ENCODE measurements at regions of chr1 and their contacts with region 1.

Region 1: DNA sequence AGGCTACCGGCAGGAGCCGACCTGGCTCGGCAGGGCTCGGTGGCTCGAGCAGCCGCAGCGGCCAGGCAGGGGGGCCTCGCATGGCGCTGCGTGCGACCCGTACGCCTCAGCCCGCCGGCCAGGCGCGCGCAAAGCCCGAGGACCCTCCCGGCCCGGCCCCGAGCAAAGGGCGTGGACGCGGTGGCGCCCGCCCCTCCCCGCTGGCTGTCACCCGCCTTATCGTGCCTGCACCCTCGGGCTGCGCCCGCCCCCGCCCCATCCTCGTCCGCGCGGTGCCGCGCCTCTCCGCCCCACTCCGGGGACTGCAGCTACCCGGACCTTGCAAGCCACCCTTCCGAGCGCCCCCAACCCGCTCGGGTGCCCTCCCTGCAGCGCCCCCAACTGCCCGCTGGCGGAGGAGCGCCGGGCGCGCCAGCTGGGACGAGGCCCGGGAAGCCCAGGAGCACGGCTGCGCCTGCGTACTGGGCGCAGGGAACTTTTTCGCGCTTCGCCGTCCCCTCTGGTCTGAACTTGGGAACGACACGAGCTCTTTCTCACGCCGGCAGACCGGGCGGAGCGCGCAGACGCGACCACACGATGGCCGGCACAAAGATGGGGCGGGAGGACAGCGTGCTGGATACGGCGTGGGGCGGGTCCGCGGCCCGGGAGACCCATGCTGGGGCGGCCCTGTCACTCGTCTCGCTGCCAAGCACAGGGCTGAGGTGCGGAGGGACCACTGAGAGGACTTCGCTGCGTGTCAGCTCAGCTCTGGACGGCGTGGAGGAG is at the start of gene ABCB10:
- DNase-seq: peak; percentile 98
- H3K4me3 ChIP-seq: peak within 1 kb of the TSS; percentile 79
- H3K27ac ChIP-seq: peak within 1 kb of the TSS; percentile 52
- H3K4me1 ChIP-seq: peaks cover 17% of the 10 kb centered on the region
- CTCF ChIP-seq: peak; percentile 80
- total RNA-seq, gene ABCB10: 14.1 and 16.4 TPM in 2 replicates

Region 2: DNA sequence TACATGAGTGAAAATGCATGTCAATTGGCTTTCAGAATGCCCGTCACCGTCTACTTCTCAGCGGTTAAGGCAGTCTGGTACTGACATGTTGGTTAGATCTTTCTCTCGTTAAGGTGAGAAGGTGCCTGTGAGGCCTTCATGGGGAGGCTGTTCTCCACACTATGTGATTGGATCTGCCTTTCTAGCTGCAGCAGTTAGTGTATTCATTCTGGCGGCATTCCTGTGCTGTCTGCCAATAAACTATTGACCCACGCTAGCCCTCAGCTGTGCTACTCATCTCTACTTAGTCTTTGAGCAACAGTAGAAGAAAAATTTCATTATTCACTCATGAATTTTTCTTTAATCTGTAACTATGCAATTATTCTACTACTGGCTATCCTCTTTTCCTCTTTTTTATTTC is 247.9 kb before region 1 on chr1:
- CTCF ChIA-PET with region 1: no interaction called
- POLR2A ChIA-PET with region 1: no interaction called
- intact Hi-C with region 1: no loop called
- DNase-seq: no peak
- H3K4me3 ChIP-seq: no peak overlapping the region
- H3K27ac ChIP-seq: no peak overlapping the region
- H3K4me1 ChIP-seq: no peaks in the 10 kb centered on the region
- CTCF ChIP-seq: no peak

Region 3: GRCh38 chr1:229495782-229496181 is 63.0 kb before region 1 on chr1:
- CTCF ChIA-PET with region 1: no interaction called
- POLR2A ChIA-PET with region 1: no interaction called
- intact Hi-C with region 1: no loop called
- DNase-seq: no peak
- H3K4me3 ChIP-seq: no peak overlapping the region
- H3K27ac ChIP-seq: no peak overlapping the region
- H3K4me1 ChIP-seq: no peaks in the 10 kb centered on the region
- CTCF ChIP-seq: no peak

Region 4: GRCh38 chr1:229507951-229508822 is 50.6 kb before region 1 on chr1 and contains the start of gene NUP133:
- CTCF ChIA-PET with region 1: no interaction called
- POLR2A ChIA-PET with region 1: interaction called, 10 read pairs
- intact Hi-C with region 1: loop called (anchors 2 kb)
- DNase-seq: peak; percentile 98
- H3K4me3 ChIP-seq: peak within 1 kb of the TSS; percentile 93
- H3K27ac ChIP-seq: peak within 1 kb of the TSS; percentile 69
- H3K4me1 ChIP-seq: peaks cover 24% of the 10 kb centered on the region
- CTCF ChIP-seq: no peak
- total RNA-seq, gene NUP133: 33.0 and 33.3 TPM in 2 replicates

Region 5: DNA sequence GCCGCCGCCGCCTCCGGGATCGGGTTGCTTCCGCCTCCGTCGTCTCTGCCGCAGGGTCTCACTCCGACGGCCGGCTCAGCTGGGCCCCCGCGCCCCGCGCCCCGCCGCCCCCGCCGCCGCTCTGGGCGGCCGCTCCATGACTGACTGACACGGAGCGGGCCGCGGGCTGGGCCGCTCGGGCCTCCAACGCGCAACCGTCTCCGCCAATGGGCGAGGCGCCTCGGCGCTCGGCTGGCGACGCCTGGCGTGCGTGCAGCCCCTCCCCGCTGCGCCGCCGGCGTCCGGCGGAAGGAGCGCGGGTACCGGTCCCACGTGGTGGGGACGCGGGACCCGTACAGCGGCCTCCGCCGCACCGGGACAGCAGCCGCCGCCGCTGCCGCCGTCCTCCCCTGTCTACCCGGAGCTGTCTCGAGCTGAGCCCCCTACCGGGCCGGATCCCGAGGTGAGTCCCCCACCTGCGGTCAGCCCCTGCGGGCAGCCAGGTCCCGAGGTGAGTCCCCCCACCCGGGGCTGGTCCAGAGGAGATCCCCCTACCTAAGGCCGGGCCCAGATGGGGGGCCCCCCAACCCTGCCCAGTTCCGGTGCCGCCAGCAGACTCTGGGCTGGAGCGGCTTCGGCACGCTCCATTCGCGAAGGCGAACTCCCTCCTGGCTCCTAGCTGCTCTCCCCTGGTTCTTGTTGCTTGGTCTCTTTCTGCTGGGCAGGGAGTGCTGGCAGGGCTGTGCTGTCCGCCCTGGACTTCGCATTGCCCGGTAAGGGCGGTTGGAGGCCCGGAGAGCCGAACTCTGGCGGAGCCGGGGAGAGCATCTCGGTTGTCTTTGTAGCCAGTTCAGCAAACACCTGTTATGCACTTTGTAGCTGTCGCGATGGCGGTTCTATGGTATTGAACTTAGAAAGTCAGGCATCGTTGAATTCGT is 67.4 kb after region 1 on chr1 and contains the starts of genes TAF5L and URB2:
- CTCF ChIA-PET with region 1: interaction called, 3 read pairs
- POLR2A ChIA-PET with region 1: interaction called, 17 read pairs
- intact Hi-C with region 1: loop called (anchors 1 kb)
- DNase-seq: peak; percentile 92
- H3K4me3 ChIP-seq: peak within 1 kb of the TSS; percentile 91
- H3K27ac ChIP-seq: peak within 1 kb of the TSS; percentile 57
- H3K4me1 ChIP-seq: peaks cover 30% of the 10 kb centered on the region
- CTCF ChIP-seq: no peak
- total RNA-seq, gene TAF5L: 23.5 and 32.9 TPM in 2 replicates
- total RNA-seq, gene URB2: 27.0 and 30.2 TPM in 2 replicates

Region 6: DNA sequence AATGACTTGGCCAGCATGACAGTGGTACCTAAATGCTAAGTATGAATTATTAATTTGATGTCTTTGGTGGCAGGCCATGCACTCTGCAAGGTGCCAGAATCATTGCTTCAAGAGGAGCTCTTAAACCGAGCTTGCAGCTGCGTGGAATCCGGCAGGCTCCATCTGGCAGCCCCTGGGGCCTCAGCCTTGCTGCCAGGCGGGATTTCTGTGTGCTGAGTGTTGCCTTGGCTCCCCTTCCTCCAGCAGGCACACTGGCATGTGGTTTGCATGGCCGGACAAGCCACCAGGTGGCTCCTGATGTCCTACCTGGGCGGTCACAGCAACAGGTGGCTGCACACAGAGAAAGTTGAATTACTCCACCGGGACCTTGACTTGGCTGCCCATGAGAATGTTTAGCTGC is 222.7 kb after region 1 on chr1:
- CTCF ChIA-PET with region 1: no interaction called
- POLR2A ChIA-PET with region 1: no interaction called
- intact Hi-C with region 1: no loop called
- DNase-seq: peak; percentile 17
- H3K4me3 ChIP-seq: no peak overlapping the region
- H3K27ac ChIP-seq: no peak overlapping the region
- H3K4me1 ChIP-seq: no peaks in the 10 kb centered on the region
- CTCF ChIP-seq: 0 out of 2 replicates have a peak, but pooled peaks have one; percentile 14